Dendritic cell treated with granulocyte-macrophage colony-stimulating factor and Interleukin-4, amounts not matched to agents 40 ng/mL and 50 ng/mL, for 4 days (primary cell): ENCODE measurements at regions of chr6 and their contacts with region 1.

Region 1: GRCh38 chr6:148947621-148948444 is 201.0 kb downstream of the UST start:
- H3K4me3 Mint-ChIP-seq: no peak overlapping the region
- H3K27ac Mint-ChIP-seq: no peak overlapping the region
- H3K4me1 Mint-ChIP-seq: peaks cover 8% of the 10 kb centered on the region
- H3K27me3 Mint-ChIP-seq: peaks cover 10% of the 10 kb centered on the region

Region 2: DNA sequence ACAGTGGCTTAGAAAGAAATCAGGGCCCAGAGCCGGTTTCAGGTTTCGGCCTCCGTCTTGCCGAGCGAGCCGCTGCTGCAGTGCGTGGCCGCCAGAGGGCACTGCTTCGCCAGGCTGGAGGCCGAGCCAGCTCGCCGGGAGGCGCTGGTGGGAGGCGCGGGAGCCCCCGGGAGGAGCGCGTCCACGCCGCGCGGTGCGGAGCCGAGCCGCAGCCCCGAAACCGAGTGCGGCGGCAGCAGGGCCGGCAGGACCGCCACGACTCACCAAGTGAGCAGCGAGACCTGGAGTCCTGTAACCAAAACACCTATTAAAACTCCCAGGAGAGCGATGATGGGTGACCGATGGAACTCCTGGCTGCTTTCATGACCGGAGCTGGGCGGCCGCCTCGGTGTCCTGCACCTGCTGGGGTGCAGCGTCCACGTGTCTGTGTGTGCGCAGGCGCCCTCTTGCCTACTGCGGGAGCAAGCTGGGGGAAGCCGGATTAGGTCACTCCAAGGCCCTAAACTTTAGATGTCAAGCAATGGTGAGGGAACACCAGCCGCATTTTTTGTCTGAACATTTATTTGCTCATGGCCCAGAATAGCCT is 387.9 kb before region 1 on chr6:
- intact Hi-C with region 1: loop called (anchors 5 kb)
- H3K4me3 Mint-ChIP-seq: peak overlapping the region; percentile 51
- H3K27ac Mint-ChIP-seq: no peak overlapping the region
- H3K4me1 Mint-ChIP-seq: peaks cover 27% of the 10 kb centered on the region
- H3K27me3 Mint-ChIP-seq: peaks cover 18% of the 10 kb centered on the region

Region 3: DNA sequence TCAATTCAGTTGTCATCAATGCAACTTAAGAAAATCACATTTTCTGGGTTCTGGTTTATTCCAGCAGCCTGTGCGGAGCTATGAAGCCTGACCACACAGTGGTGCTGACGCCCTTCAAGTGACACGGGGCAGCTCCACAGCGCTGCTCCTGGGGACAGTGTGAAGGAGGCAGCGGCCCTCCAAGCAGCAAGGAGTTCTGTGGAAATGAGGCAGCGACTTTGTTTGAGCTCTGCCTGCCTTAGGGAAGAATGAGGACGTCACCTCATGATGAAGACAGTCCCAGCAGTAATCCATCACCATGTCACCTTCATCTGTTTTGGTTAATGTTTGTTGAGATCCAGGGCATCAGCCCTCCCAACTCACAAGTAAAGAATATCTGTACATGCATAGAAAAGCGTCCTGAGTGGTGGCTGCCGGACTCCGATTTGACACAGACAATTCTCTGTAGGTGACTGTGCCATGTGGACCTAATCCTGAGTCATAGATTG is 369.5 kb before region 1 on chr6:
- intact Hi-C with region 1: loop called (anchors 1 kb)
- H3K4me3 Mint-ChIP-seq: no peak overlapping the region
- H3K27ac Mint-ChIP-seq: no peak overlapping the region
- H3K4me1 Mint-ChIP-seq: peaks cover 26% of the 10 kb centered on the region
- H3K27me3 Mint-ChIP-seq: peaks cover 28% of the 10 kb centered on the region

Region 4: DNA sequence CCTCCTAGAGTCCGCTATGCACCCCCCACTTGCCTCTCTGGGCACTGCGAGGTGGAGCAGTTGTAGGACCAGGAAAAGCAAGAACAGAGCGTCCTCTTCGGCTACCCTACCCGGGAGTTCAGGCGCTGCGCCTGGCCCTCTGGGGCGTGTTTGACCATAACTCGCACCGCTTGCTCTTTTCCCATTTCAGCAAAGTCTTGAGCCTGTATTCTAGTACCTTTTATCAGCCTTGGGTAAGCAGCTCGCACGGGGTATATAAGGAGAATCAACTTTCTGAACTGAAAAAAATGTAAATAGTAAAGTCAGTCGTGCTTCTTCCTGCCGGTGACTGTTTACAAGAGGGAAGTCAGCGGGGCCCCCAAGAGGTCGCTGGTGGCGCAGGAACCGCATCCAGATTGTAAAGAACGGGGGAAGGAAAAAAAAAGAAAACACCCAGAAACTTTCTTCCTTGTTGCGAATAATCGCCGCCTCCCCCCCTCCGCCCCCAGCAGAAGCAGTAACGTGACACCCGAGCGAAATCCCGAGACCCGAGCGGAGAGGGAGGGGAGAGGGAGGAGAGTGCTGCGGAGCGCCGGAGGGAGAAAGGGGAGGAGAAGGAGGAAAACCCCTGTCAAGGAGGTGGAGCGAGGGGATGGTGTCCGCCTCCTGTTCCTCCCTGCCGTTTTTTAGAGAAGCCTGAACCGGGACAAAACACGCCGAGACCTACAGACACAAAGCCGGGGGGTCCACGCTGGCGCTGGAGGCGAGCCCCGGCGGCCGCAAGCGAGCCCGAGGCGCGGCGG is 201.3 kb before region 1 on chr6 and contains the start of gene UST:
- intact Hi-C with region 1: loop called (anchors 2 kb)
- H3K4me3 Mint-ChIP-seq: peak within 1 kb of the TSS; percentile 93
- H3K27ac Mint-ChIP-seq: peak within 1 kb of the TSS; percentile 89
- H3K4me1 Mint-ChIP-seq: peaks cover 18% of the 10 kb centered on the region
- H3K27me3 Mint-ChIP-seq: peaks cover 76% of the 10 kb centered on the region